Aorta (tissue), 5 donors: ENCODE measurements at regions of chr6 and their contacts with region 1.

Region 1: GRCh38 chr6:41002216-41002615 is 36.8 kb downstream of the UNC5CL start:
- DNase-seq: no peak
- ATAC-seq: no peak
- H3K4me3 ChIP-seq: no peak overlapping the region
- H3K27ac ChIP-seq: no peak overlapping the region
- H3K4me1 ChIP-seq: no peaks in the 10 kb centered on the region
- H3K27me3 ChIP-seq: no peaks in the 10 kb centered on the region

Region 2: DNA sequence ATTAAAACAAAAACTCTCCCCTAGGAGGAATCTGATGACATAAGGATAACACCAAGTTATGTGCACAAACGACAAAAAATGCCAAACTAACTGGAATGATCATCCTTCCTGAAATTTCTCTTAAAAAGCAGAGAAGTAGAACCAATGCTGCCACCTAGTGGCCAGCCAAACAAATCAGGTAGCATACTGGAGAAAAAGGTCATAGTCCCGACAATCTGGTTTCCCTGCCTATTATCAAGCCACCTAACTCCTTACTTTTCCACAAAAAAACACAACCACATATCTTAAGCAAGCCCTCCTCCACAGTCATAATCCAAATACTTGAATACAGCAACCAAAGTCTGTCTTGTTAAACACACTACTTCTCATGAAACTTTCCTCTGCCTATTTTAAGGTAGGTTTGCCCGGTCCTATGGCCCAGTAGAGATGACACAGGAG is 64.7 kb after region 1 on chr6:
- intact Hi-C with region 1: loop called in 1 of 2 experiments (anchors 2 kb)
- DNase-seq: peak; percentile 81 to 87
- ATAC-seq: no peak
- H3K4me3 ChIP-seq: no peak overlapping the region
- H3K27ac ChIP-seq: no peak overlapping the region
- H3K4me1 ChIP-seq: no peaks in the 10 kb centered on the region
- H3K27me3 ChIP-seq: no peaks in the 10 kb centered on the region